CD8-positive, alpha-beta T cell (primary cell): ENCODE measurements at regions of chr1 and their contacts with region 1.

Region 1: DNA sequence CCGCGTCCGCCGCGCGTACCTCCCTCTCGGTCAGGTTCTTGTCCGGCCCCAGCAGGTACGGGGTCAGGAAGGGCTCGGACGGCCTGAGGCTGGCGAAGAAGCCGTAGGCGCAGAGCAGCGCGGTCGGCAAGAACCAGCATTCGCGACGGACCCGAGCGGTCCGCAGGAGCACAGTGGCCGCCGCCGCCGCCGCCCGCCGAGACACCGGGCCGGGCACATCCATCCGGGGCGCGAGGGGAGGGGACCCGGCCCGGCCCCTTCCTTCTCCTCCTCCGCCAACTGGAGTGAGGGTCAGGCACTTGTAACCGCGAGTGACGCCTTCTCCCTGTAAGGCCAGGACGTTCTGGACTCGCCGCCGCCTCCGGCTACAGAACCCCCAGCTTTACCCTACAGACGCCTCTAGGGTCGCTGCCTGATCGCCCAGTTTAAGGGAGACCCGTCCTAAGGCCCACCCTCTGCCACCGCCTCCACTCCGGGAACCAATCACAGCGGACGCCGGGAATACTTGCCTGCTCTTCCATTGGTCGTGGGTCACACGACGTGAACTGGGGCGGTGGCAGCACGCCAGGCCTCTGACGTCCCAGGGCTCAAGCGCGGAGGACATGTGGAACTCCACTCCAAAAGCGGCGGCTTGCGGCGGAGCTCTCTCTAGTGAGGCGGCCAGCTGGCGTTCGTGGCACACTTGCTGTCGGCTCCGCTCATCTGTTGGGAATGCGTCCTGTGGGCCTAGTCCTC is at the start of gene SLC19A2:
- DNase-seq: peak; percentile 84 to 97 (median 93)
- ATAC-seq: peak; percentile 98
- H3K4me3 ChIP-seq: peak within 1 kb of the TSS; percentile 69 to 79
- H3K4me3 Mint-ChIP-seq: peak within 1 kb of the TSS; percentile 97
- H3K27ac ChIP-seq: peak within 1 kb of the TSS; percentile 73 to 79
- H3K27ac Mint-ChIP-seq: peak within 1 kb of the TSS; percentile 95
- H3K4me1 ChIP-seq: peaks cover 20% of the 10 kb centered on the region
- H3K4me1 Mint-ChIP-seq: peaks cover 43% of the 10 kb centered on the region
- H3K27me3 ChIP-seq: no peaks in the 10 kb centered on the region
- H3K27me3 Mint-ChIP-seq: no peaks in the 10 kb centered on the region
- CTCF ChIP-seq: no peak
- total RNA-seq, gene SLC19A2: 4.7 to 6.1 TPM

Region 2: DNA sequence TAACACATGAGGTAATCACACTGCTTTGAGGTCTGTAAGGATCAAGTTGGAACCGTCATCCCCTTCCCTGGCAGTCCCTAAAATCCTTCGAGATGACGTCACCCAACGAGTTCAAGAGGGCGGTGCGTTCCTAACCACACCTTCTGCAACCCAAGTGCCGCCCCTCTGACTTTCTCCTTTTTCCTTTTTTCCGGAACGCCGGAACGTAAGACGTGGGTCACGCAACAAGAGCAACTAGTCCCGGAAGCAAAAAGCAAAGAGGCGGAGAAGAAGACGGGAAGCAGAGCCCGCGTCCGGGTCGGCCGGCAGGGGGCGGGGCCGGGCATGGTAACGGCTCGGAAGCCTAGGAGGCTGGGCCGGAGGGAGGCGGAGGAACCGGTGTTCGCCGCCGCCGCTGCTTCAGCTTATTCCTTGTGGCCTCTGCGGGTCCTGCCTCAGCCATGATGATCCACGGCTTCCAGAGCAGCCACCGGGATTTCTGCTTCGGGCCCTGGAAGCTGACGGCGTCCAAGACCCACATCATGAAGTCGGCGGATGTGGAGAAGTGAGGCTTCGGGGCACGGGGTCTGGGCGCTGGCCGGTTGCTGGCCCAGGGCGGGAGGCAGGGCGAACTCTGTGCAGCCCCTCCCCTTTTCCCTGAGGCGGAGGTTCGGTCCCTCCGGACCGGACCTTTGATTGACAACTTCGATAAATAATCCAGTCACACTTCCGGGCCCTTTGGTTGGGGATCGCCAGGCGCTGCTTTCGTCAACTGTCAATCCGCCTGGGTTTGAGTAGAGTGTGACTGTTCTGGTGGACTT is 1306.9 kb before region 1 on chr1 and contains the start of gene TIPRL:
- CTCF ChIA-PET with region 1: no interaction called
- POLR2A ChIA-PET with region 1: no interaction called
- intact Hi-C with region 1: loop called (anchors 5 to 10 kb)
- DNase-seq: peak; percentile 84 to 97 (median 93)
- ATAC-seq: peak; percentile 86
- H3K4me3 ChIP-seq: peak within 1 kb of the TSS; percentile 98 to 100
- H3K4me3 Mint-ChIP-seq: no peak within 1 kb of the TSS
- H3K27ac ChIP-seq: peak within 1 kb of the TSS; percentile 95 to 97
- H3K27ac Mint-ChIP-seq: no peak within 1 kb of the TSS
- H3K4me1 ChIP-seq: peaks cover 15% of the 10 kb centered on the region
- H3K4me1 Mint-ChIP-seq: peaks cover 12% of the 10 kb centered on the region
- H3K27me3 ChIP-seq: no peaks in the 10 kb centered on the region
- H3K27me3 Mint-ChIP-seq: peaks cover 7% of the 10 kb centered on the region
- CTCF ChIP-seq: peak; percentile 49
- total RNA-seq, gene TIPRL: 15.0 to 18.3 TPM

Region 3: GRCh38 chr1:168225476-168226190 is 1260.1 kb before region 1 on chr1 and contains the start of gene SFT2D2:
- CTCF ChIA-PET with region 1: no interaction called
- POLR2A ChIA-PET with region 1: no interaction called
- intact Hi-C with region 1: loop called in 1 of 2 experiments (anchors 10 kb)
- DNase-seq: peak; percentile 46 to 89 (median 77)
- ATAC-seq: peak; percentile 98
- H3K4me3 ChIP-seq: peak within 1 kb of the TSS; percentile 90 to 93
- H3K4me3 Mint-ChIP-seq: peak within 1 kb of the TSS; percentile 94
- H3K27ac ChIP-seq: peak within 1 kb of the TSS; percentile 71 to 75
- H3K27ac Mint-ChIP-seq: peak within 1 kb of the TSS; percentile 93
- H3K4me1 ChIP-seq: peaks cover 37% of the 10 kb centered on the region
- H3K4me1 Mint-ChIP-seq: peaks cover 49% of the 10 kb centered on the region
- H3K27me3 ChIP-seq: no peaks in the 10 kb centered on the region
- H3K27me3 Mint-ChIP-seq: peaks cover 3% of the 10 kb centered on the region
- CTCF ChIP-seq: no peak
- total RNA-seq, gene SFT2D2: 61.2 to 62.3 TPM

Region 4: DNA sequence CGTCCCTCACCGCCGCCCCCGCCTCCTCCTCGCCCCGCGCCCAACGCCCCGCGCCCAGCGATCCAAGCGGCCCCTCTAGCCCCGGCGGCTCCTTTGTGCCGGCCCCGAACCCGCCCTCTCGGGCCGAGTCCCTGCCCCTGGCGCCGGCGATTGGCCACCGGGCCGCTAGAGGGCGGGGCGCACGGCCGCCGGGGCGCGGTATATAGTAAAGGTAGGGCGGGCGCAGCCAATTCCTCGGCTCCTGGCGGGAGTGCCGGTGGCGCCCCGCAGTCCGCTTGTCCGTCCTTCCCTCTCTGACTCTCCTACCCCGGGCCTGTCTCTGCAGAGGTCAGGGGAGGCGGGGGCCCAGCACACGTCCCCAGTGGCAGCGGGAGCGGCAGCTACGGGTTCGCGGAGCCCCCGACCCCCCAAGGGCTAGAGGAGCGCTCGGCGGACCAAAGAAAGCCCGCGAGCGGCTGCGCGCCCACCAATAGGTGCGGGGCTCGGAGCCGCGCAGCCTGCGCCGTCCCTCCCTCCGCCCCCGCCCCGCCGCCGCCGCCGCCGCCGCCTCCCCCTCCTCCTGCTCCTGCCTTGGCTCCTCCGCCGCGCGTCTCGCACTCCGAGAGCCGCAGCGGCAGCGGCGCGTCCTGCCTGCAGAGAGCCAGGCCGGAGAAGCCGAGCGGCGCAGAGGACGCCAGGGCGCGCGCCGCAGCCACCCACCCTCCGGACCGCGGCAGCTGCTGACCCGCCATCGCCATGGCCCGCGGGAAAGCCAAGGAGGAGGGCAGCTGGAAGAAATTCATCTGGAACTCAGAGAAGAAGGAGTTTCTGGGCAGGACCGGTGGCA is 379.4 kb before region 1 on chr1 and contains the start of gene ATP1B1:
- CTCF ChIA-PET with region 1: no interaction called
- POLR2A ChIA-PET with region 1: no interaction called
- intact Hi-C with region 1: loop called in 1 of 2 experiments (anchors 5 kb)
- DNase-seq: peak; percentile 59 to 88 (median 78)
- ATAC-seq: peak; percentile 89
- H3K4me3 ChIP-seq: peak within 1 kb of the TSS; percentile 65 to 74
- H3K4me3 Mint-ChIP-seq: peak within 1 kb of the TSS; percentile 91
- H3K27ac ChIP-seq: no peak within 1 kb of the TSS
- H3K27ac Mint-ChIP-seq: peak within 1 kb of the TSS; percentile 23
- H3K4me1 ChIP-seq: peaks cover 24% of the 10 kb centered on the region
- H3K4me1 Mint-ChIP-seq: peaks cover 33% of the 10 kb centered on the region
- H3K27me3 ChIP-seq: peaks cover 0 to 2% of the 10 kb centered on the region in 2 experiments
- H3K27me3 Mint-ChIP-seq: peaks cover 4% of the 10 kb centered on the region
- CTCF ChIP-seq: peak; percentile 29
- total RNA-seq, gene ATP1B1: 2.6 to 3.0 TPM

Region 5: GRCh38 chr1:170531758-170532657 is 1046.3 kb after region 1 on chr1 and contains the start of gene GORAB:
- CTCF ChIA-PET with region 1: no interaction called
- POLR2A ChIA-PET with region 1: no interaction called
- intact Hi-C with region 1: loop called (anchors 2 to 5 kb)
- DNase-seq: peak; percentile 72 to 93 (median 85)
- ATAC-seq: peak; percentile 90
- H3K4me3 ChIP-seq: peak within 1 kb of the TSS; percentile 73 to 86
- H3K4me3 Mint-ChIP-seq: no peak within 1 kb of the TSS
- H3K27ac ChIP-seq: peak within 1 kb of the TSS; percentile 80 to 91
- H3K27ac Mint-ChIP-seq: no peak within 1 kb of the TSS
- H3K4me1 ChIP-seq: peaks cover 14% of the 10 kb centered on the region
- H3K4me1 Mint-ChIP-seq: peaks cover 22% of the 10 kb centered on the region
- H3K27me3 ChIP-seq: no peaks in the 10 kb centered on the region
- H3K27me3 Mint-ChIP-seq: no peaks in the 10 kb centered on the region
- CTCF ChIP-seq: no peak
- total RNA-seq, gene GORAB: 24.8 to 26.1 TPM